ENCODE measurements at regions of chr11 and their contacts with region 1.

Region 1: GRCh38 chr11:8911029-8911826 is at the start of gene AKIP1:
- DNase-seq: peak; percentile 94
- H3K4me3 Mint-ChIP-seq: peak within 1 kb of the TSS; percentile 89
- H3K27ac Mint-ChIP-seq: peak within 1 kb of the TSS; percentile 87
- H3K4me1 Mint-ChIP-seq: peaks cover 39% of the 10 kb centered on the region
- H3K27me3 Mint-ChIP-seq: peaks cover 14% of the 10 kb centered on the region
- total RNA-seq, gene AKIP1: 25.1 and 31.7 TPM in 2 replicates

Region 2: GRCh38 chr11:8688414-8689362 is 222.5 kb before region 1 on chr11:
- intact Hi-C with region 1: loop called (anchors 2 kb)
- DNase-seq: peak; percentile 96
- H3K4me3 Mint-ChIP-seq: peak overlapping the region; percentile 94
- H3K27ac Mint-ChIP-seq: peak overlapping the region; percentile 88
- H3K4me1 Mint-ChIP-seq: peaks cover 43% of the 10 kb centered on the region
- H3K27me3 Mint-ChIP-seq: no peaks in the 10 kb centered on the region

Region 3: DNA sequence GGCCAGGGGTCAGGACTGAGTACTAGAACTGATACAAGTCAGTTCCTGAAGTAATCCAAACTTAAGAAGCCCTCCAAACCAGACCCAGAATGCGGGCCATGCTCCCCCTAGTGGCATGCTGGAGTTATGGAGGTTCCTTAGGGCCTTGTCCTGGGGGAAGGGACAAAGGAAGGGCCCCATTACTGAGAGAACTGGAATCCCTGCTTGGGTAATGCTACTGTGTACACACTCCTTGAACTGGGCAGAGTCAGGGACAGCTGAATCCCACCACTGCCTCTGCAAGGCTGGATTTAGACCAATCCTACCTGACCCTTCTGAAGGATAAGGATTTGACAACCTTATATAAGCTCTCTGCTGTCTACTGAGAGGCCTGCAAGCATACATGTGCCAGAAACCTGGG is 97.6 kb before region 1 on chr11:
- intact Hi-C with region 1: loop called (anchors 5 kb)
- DNase-seq: peak; percentile 78
- H3K4me3 Mint-ChIP-seq: no peak overlapping the region
- H3K27ac Mint-ChIP-seq: no peak overlapping the region
- H3K4me1 Mint-ChIP-seq: peaks cover 9% of the 10 kb centered on the region
- H3K27me3 Mint-ChIP-seq: peaks cover 20% of the 10 kb centered on the region

Region 4: GRCh38 chr11:8899119-8899753 is 12.0 kb before region 1 on chr11:
- intact Hi-C with region 1: no loop called
- DNase-seq: no peak
- H3K4me3 Mint-ChIP-seq: no peak overlapping the region
- H3K27ac Mint-ChIP-seq: no peak overlapping the region
- H3K4me1 Mint-ChIP-seq: no peaks in the 10 kb centered on the region
- H3K27me3 Mint-ChIP-seq: peaks cover 15% of the 10 kb centered on the region

Region 5: GRCh38 chr11:8989453-8989852 is 78.2 kb after region 1 on chr11:
- intact Hi-C with region 1: no loop called
- DNase-seq: no peak
- H3K4me3 Mint-ChIP-seq: no peak overlapping the region
- H3K27ac Mint-ChIP-seq: no peak overlapping the region
- H3K4me1 Mint-ChIP-seq: peaks cover 10% of the 10 kb centered on the region
- H3K27me3 Mint-ChIP-seq: peaks cover 2% of the 10 kb centered on the region

Region 6: GRCh38 chr11:9003573-9004309 is 92.5 kb after region 1 on chr11 and contains the start of gene NRIP3:
- intact Hi-C with region 1: loop called (anchors 5 kb)
- DNase-seq: peak; percentile 94
- H3K4me3 Mint-ChIP-seq: peak within 1 kb of the TSS; percentile 86
- H3K27ac Mint-ChIP-seq: peak within 1 kb of the TSS; percentile 77
- H3K4me1 Mint-ChIP-seq: peaks cover 26% of the 10 kb centered on the region
- H3K27me3 Mint-ChIP-seq: peaks cover 45% of the 10 kb centered on the region
- total RNA-seq, gene NRIP3: 4.8 and 5.3 TPM in 2 replicates

Region 7: DNA sequence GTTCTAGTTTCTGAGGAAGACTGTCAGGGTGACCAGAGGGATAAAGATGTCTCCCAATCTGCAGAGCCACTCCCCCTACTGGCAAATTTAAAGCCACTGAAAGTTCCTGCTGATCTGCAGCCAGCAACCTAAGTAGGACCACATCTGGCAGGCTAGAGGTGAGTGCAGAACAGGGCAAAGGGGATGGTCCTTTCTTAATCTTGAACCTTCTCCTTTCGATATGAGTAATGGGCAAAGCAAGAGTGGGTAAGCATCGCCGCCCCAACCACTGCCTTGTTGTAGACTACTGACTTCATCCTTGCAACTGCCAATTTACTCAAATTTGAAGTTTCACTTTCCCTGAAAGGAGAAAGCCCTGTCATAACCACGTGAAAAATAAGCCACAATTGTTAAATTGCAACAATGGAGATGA is 149.5 kb after region 1 on chr11:
- intact Hi-C with region 1: loop called (anchors 5 kb)
- DNase-seq: peak; percentile 84
- H3K4me3 Mint-ChIP-seq: no peak overlapping the region
- H3K27ac Mint-ChIP-seq: peak overlapping the region; percentile 30
- H3K4me1 Mint-ChIP-seq: peaks cover 14% of the 10 kb centered on the region
- H3K27me3 Mint-ChIP-seq: peaks cover 17% of the 10 kb centered on the region

Region 8: GRCh38 chr11:9137293-9138132 is 226.3 kb after region 1 on chr11:
- intact Hi-C with region 1: loop called (anchors 1 kb)
- DNase-seq: peak; percentile 92
- H3K4me3 Mint-ChIP-seq: no peak overlapping the region
- H3K27ac Mint-ChIP-seq: peak overlapping the region; percentile 80
- H3K4me1 Mint-ChIP-seq: peaks cover 29% of the 10 kb centered on the region
- H3K27me3 Mint-ChIP-seq: no peaks in the 10 kb centered on the region

Region 9: GRCh38 chr11:9187616-9188015 is 276.4 kb after region 1 on chr11:
- intact Hi-C with region 1: no loop called
- DNase-seq: no peak
- H3K4me3 Mint-ChIP-seq: no peak overlapping the region
- H3K27ac Mint-ChIP-seq: no peak overlapping the region
- H3K4me1 Mint-ChIP-seq: no peaks in the 10 kb centered on the region
- H3K27me3 Mint-ChIP-seq: no peaks in the 10 kb centered on the region

Measured in activated CD4-positive, alpha-beta T cell treated with anti-CD3 and anti-CD28 coated beads, Interleukin-2, amount 10 ng/mL, durations not matched to agents 24 days and 14 days (primary cell).